SK-N-SH (cell line): ENCODE measurements at regions of chr10 and their contacts with region 1.

Region 1: DNA sequence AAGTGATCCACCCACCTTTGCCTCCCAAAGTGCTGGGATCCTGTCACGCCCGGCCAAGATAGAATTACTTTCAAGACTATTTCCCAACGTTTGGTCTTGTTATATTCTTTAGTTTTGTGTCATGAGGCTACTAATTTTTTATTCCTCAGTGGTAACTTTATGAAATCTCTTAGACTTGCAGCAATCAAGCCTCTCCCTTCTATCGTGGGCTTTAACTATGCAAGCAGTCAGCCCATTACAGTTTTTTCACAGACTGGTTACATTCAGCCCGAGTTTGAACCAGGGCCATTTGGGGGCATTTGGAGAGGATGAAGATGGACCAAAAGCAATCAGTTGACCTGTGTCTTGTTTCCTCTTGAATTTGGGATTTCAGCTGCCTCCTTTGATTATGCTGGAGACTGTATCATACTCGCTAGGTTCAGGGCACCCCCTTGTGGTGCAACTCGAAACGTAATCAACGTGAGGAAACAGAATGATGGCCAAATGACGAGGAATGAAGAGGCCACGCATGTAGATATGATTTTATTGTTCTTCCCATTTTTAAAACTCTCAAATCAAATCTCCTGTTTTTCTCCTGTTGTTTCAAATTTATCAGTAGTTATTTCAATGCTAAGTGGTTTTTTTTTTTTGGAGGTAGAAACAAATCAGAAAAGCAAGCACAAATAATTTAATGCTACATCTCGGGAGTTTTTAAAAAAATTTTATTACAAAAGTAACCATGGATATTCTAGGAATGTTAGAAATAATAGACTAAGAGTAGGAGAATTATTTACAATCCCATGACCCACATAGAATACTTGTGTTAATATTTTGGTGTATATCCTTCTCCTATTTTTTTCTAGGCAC is 151.6 kb downstream of the KIAA1217 start:
- DNase-seq: peak; percentile 68
- H3K4me3 ChIP-seq: no peak overlapping the region; a peak in 1 of 4 replicates
- H3K27ac ChIP-seq: no peak overlapping the region
- H3K4me1 ChIP-seq: no peaks in the 10 kb centered on the region; a peak in 1 of 4 replicates
- H3K27me3 ChIP-seq: no peaks in the 10 kb centered on the region
- CTCF ChIP-seq: peak; percentile 86
- EP300 ChIP-seq: no peak
- RAD21 ChIP-seq: peak; percentile 91

Region 2: GRCh38 chr10:24349379-24350001 is 11.0 kb before region 1 on chr10:
- CTCF ChIA-PET with region 1: interaction called, 13 read pairs
- POLR2A ChIA-PET with region 1: no interaction called
- DNase-seq: no peak
- H3K4me3 ChIP-seq: no peak overlapping the region
- H3K27ac ChIP-seq: peak overlapping the region; percentile 80 to 88
- H3K4me1 ChIP-seq: peaks cover 14 to 55% of the 10 kb centered on the region in 2 experiments
- H3K27me3 ChIP-seq: no peaks in the 10 kb centered on the region
- CTCF ChIP-seq: no peak
- EP300 ChIP-seq: no peak
- RAD21 ChIP-seq: no peak

Region 3: GRCh38 chr10:24428410-24428782 is 67.9 kb after region 1 on chr10:
- CTCF ChIA-PET with region 1: no interaction called
- POLR2A ChIA-PET with region 1: no interaction called
- DNase-seq: no peak
- H3K4me3 ChIP-seq: no peak overlapping the region
- H3K27ac ChIP-seq: peak overlapping the region; percentile 61 to 72; a peak in 3 of 4 replicates
- H3K4me1 ChIP-seq: peaks cover 0 to 6% of the 10 kb centered on the region in 2 experiments; a peak in 1 of 4 replicates
- H3K27me3 ChIP-seq: no peaks in the 10 kb centered on the region
- CTCF ChIP-seq: no peak
- EP300 ChIP-seq: no peak
- RAD21 ChIP-seq: no peak

Region 4: DNA sequence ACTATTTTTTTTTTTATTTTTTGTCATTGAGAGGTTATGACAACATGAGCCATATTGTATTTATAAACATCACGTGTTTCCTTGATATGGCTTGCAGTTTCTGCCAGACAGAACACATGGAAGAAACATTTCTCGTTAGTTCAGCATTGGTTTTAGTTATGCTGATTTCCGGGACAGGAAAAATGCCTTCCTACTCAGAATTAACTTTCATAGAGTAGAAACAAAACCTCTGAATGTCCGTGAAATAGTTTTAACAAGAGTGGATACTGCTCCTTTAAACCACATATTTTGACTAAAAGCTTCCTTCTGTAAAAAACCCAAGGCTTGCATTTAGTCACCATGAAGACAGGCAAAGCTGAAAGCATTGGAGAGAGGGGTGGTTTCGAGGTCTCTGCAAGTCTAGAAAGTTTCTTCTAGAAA is 88.8 kb after region 1 on chr10:
- CTCF ChIA-PET with region 1: no interaction called
- POLR2A ChIA-PET with region 1: no interaction called
- DNase-seq: no peak
- H3K4me3 ChIP-seq: peak overlapping the region in 1 of 2 experiments; percentile 25; a peak in 2 of 4 replicates
- H3K27ac ChIP-seq: peak overlapping the region; percentile 71 to 84; a peak in 3 of 4 replicates
- H3K4me1 ChIP-seq: peaks cover 23 to 41% of the 10 kb centered on the region in 2 experiments
- H3K27me3 ChIP-seq: no peaks in the 10 kb centered on the region
- CTCF ChIP-seq: no peak
- EP300 ChIP-seq: no peak
- RAD21 ChIP-seq: no peak

Region 5: DNA sequence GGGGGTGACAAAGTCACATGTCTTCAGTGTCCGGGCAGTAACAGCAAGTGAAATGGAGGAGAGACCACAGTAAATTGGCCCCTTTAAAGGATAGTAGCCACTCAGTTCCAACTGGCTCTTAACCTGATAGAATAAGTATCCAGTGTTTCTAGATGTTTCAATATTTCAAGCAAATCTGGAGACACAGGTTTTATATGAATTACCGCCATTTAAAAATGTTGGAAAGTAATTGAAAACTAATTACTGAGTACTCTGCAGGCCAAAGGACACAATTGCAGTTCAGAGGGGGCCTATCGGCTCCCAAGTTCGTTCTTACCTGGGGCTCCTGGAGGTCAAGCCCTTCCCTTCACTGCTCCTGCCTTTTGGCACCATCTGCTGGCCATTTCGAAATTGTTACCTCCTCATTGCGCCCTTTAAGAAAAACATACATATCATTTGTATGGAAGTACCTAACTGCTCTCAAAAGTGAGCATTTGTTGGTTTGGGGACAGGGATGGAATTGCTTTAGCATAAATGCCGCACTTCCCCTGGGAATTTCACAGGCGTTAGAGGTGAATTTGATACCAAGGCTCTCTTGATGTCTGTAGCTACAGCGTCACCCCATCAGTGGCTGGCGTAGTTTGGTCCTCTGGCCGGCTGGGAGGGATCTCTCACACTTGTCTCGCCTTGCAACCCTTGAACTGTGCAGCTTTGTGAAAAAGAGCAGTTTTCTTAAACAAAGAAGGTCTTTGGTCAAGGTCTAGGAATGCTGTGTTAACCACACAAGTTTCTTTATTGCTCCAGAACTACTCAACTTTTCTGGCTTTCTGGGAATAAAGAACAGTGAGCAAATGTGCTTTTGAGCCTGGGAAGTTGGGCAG is 143.2 kb after region 1 on chr10:
- CTCF ChIA-PET with region 1: interaction called, 13 read pairs
- POLR2A ChIA-PET with region 1: no interaction called
- DNase-seq: peak; percentile 63
- H3K4me3 ChIP-seq: no peak overlapping the region; a peak in 1 of 4 replicates
- H3K27ac ChIP-seq: no peak overlapping the region
- H3K4me1 ChIP-seq: peaks cover 0 to 4% of the 10 kb centered on the region in 2 experiments; a peak in 2 of 4 replicates
- H3K27me3 ChIP-seq: no peaks in the 10 kb centered on the region
- CTCF ChIP-seq: peak; percentile 85
- EP300 ChIP-seq: no peak
- RAD21 ChIP-seq: peak; percentile 88

Region 6: GRCh38 chr10:24849501-24850299 is 489.2 kb after region 1 on chr10:
- CTCF ChIA-PET with region 1: no interaction called
- POLR2A ChIA-PET with region 1: no interaction called
- DNase-seq: no peak
- H3K4me3 ChIP-seq: no peak overlapping the region
- H3K27ac ChIP-seq: no peak overlapping the region
- H3K4me1 ChIP-seq: 0 out of 4 replicates have a peak, but pooled peaks cover 0 to 5% of the 10 kb centered on the region in 2 experiments
- H3K27me3 ChIP-seq: no peaks in the 10 kb centered on the region
- CTCF ChIP-seq: no peak
- EP300 ChIP-seq: no peak
- RAD21 ChIP-seq: no peak